Activated CD4-positive, alpha-beta T cell treated with anti-CD3 and anti-CD28 coated beads for 36 hours (primary cell): ENCODE measurements at regions of chr12 and their contacts with region 1.

Region 1: DNA sequence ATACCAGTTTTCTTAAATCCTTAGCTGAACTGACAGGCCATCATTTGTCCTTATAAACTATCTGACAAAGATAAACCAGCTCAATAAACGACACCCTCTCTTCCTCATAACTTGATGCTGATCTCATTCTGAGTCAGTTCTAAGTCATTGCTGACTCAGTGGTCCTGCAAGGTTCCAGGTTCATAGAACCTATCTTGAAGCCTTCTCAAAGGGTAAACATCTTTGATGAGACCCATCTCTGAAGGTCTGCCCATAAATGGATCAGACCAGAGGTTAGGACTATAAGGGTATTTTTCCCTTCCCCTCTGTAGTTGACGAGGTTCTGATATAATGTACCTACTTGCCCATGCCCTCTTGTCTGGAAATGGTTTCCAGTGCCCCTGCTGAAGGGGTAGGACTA is 11.9 kb downstream of the NAA25 start:
- DNase-seq: peak; percentile 47
- ATAC-seq: peak; percentile 96
- H3K4me3 Mint-ChIP-seq: peak overlapping the region; percentile 35
- H3K27ac Mint-ChIP-seq: peak overlapping the region; percentile 93
- H3K4me1 Mint-ChIP-seq: peaks cover 48% of the 10 kb centered on the region
- H3K27me3 Mint-ChIP-seq: no peaks in the 10 kb centered on the region

Region 2: DNA sequence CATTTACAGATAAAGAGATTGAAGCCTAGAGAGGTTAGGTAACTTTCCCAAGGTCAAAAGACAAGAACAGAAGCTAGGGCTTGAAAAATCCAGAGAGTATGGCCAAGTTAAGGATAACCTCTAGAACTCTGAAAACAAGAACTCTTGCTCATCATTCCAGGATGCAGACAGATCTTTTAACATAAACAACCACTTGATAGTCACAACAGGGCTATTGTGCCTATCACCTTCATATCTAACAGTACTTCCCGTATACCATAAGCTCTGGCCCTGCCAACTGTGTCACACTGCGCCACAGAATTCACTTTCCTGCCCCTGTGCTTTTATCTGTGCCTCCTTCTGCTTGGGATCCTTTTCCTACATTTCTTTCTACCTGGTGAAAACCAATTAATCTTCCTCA is 65.2 kb before region 1 on chr12:
- CTCF ChIA-PET with region 1: no interaction called
- POLR2A ChIA-PET with region 1: no interaction called
- intact Hi-C with region 1: no loop called
- DNase-seq: no peak
- ATAC-seq: peak; percentile 23
- H3K4me3 Mint-ChIP-seq: no peak overlapping the region
- H3K27ac Mint-ChIP-seq: peak overlapping the region; percentile 7
- H3K4me1 Mint-ChIP-seq: peaks cover 18% of the 10 kb centered on the region
- H3K27me3 Mint-ChIP-seq: no peaks in the 10 kb centered on the region

Region 3: GRCh38 chr12:112108201-112109079 is 11.8 kb after region 1 on chr12 and contains the start of gene NAA25:
- CTCF ChIA-PET with region 1: interaction called, 6 read pairs
- POLR2A ChIA-PET with region 1: interaction called, 26 read pairs
- intact Hi-C with region 1: loop called (anchors 1 kb)
- DNase-seq: peak; percentile 94
- ATAC-seq: peak; percentile 80
- H3K4me3 Mint-ChIP-seq: peak within 1 kb of the TSS; percentile 97
- H3K27ac Mint-ChIP-seq: peak within 1 kb of the TSS; percentile 99
- H3K4me1 Mint-ChIP-seq: peaks cover 55% of the 10 kb centered on the region
- H3K27me3 Mint-ChIP-seq: no peaks in the 10 kb centered on the region
- total RNA-seq, gene NAA25: 50.9 to 58.5 TPM

Region 4: DNA sequence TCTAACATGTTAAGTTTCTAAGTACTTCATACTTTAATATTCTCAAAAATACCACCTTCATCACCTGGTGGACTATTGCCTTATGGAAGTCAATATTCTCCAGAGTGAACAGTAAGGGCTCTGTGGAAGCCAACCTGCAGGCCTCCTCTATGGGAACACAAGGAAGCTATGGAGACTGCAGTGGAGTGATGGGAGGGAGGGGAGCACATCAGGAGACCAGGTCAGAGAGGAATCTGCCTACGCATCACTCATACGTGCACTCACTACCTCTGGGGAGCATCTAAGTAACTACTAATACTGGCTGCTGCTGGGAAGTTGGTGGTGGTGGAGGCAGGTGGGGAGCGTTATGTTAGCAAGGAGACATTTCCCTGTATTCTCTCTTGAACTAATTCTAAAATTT is 265.6 kb after region 1 on chr12:
- CTCF ChIA-PET with region 1: no interaction called
- POLR2A ChIA-PET with region 1: no interaction called
- intact Hi-C with region 1: no loop called
- DNase-seq: no peak
- ATAC-seq: no peak
- H3K4me3 Mint-ChIP-seq: no peak overlapping the region
- H3K27ac Mint-ChIP-seq: no peak overlapping the region
- H3K4me1 Mint-ChIP-seq: no peaks in the 10 kb centered on the region
- H3K27me3 Mint-ChIP-seq: no peaks in the 10 kb centered on the region